RWPE1 (cell line): ENCODE measurements at regions of chr5 and their contacts with region 1.

Region 1: GRCh38 chr5:1140171-1140817 is 28.4 kb upstream of the SLC12A7 start:
- DNase-seq: peak; percentile 51
- H3K27ac ChIP-seq: peak overlapping the region; percentile 62
- CTCF ChIP-seq: peak; percentile 89

Region 2: GRCh38 chr5:1167728-1168709 is 27.7 kb after region 1 on chr5:
- CTCF ChIA-PET with region 1: interaction called, 18 read pairs
- POLR2A ChIA-PET with region 1: no interaction called
- DNase-seq: peak; percentile 78
- H3K27ac ChIP-seq: peak overlapping the region; percentile 65
- CTCF ChIP-seq: peak; percentile 95